MCF 10A (cell line): ENCODE measurements at regions of chr17 and their contacts with region 1.

Region 1: DNA sequence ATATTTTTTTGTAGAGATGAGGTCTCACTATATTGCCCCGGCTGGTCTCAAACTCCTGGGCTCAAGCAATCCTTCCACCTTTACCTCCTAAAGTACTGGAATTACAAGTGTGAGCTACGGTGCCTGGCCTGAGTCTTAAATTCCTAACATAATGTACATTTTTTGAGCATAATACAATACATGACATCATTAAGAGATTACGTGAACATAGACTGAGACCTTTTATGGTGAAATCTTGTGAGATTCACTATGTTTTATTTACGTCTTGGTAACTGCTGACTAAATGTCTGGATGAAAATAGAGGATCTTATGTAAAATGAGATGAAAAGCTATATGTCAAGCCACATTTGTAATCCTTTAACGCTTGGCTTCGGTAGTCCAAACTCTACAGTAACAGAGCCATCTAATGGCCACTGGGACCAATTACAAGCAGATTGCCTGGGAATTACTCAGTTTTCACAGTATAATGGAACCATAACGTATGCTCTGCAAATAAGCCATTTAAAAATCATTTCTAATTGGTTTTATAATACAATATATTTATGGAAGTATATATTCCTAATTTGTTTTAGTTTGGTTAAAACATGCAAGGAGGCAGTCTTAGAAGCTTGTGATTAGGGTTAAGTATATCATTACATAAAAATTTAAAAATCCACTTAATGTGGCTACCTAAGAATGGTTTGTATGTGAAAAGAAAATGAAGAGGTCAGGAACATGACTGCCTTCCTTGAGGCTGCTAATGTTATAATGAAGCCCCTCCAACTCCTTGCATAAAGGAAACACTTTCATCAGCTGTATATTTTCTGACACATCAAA is 8.1 kb upstream of the EFCAB13 start:
- DNase-seq: peak; percentile 83
- H3K4me3 Mint-ChIP-seq: no peak overlapping the region
- H3K27ac Mint-ChIP-seq: peak overlapping the region; percentile 23
- H3K4me1 Mint-ChIP-seq: peaks cover 4% of the 10 kb centered on the region
- H3K27me3 Mint-ChIP-seq: no peaks in the 10 kb centered on the region
- CTCF ChIP-seq: peak; percentile 89

Region 2: GRCh38 chr17:46940621-46941404 is 374.8 kb before region 1 on chr17:
- CTCF ChIA-PET with region 1: interaction called, 3 read pairs
- POLR2A ChIA-PET with region 1: no interaction called
- intact Hi-C with region 1: loop called (anchors 10 kb)
- DNase-seq: peak; percentile 72
- H3K4me3 Mint-ChIP-seq: no peak overlapping the region
- H3K27ac Mint-ChIP-seq: no peak overlapping the region
- H3K4me1 Mint-ChIP-seq: no peaks in the 10 kb centered on the region
- H3K27me3 Mint-ChIP-seq: no peaks in the 10 kb centered on the region
- CTCF ChIP-seq: peak; percentile 80

Region 3: DNA sequence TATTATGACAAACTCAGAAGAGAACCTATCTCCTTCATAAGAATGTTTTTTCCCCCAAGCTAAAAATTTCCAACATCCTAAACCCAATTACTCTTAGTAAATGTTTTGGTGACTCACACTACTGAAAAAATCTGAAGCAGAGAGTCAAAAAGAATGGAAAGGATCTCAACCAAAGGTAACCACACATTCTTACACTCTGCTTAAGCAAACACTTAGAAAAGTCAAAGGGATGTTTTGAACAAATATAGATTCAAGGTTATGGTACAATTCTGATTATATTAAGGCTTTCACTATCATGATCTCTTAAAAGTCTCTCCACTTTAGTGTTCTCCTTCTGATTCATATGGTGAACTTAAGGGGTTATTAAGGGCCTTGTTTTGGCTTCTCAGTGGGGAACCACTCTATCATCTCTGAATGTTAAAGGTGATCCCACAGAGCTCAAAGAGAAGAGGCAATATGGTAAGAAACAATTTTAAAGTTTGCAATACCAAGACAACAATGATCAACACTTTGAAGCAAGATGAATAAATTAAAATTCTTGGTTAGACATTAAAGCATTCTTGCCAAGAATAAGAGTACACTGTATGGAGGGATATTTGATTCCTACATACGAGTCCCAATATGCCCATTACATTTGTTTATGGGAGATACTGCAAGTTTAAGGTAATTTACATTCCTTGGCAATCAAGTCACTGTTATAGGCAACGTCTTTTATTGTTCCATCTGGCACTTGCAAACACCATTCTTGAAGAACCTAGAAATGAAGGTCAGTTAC is 195.7 kb before region 1 on chr17:
- CTCF ChIA-PET with region 1: no interaction called
- POLR2A ChIA-PET with region 1: no interaction called
- intact Hi-C with region 1: no loop called
- DNase-seq: peak; percentile 13
- H3K4me3 Mint-ChIP-seq: no peak overlapping the region
- H3K27ac Mint-ChIP-seq: peak overlapping the region; percentile 42
- H3K4me1 Mint-ChIP-seq: peaks cover 7% of the 10 kb centered on the region
- H3K27me3 Mint-ChIP-seq: no peaks in the 10 kb centered on the region
- CTCF ChIP-seq: no peak

Region 4: GRCh38 chr17:47229535-47230443 is 85.9 kb before region 1 on chr17:
- CTCF ChIA-PET with region 1: interaction called, 90 read pairs
- POLR2A ChIA-PET with region 1: interaction called, 7 read pairs
- intact Hi-C with region 1: loop called (anchors 1 kb)
- DNase-seq: peak; percentile 95
- H3K4me3 Mint-ChIP-seq: peak overlapping the region; percentile 19
- H3K27ac Mint-ChIP-seq: no peak overlapping the region
- H3K4me1 Mint-ChIP-seq: peaks cover 30% of the 10 kb centered on the region
- H3K27me3 Mint-ChIP-seq: no peaks in the 10 kb centered on the region
- CTCF ChIP-seq: peak; percentile 98

Region 5: GRCh38 chr17:47279062-47279736 is 36.5 kb before region 1 on chr17:
- CTCF ChIA-PET with region 1: no interaction called
- POLR2A ChIA-PET with region 1: no interaction called
- intact Hi-C with region 1: loop called (anchors 5 kb)
- DNase-seq: peak; percentile 98
- H3K4me3 Mint-ChIP-seq: peak overlapping the region; percentile 38
- H3K27ac Mint-ChIP-seq: peak overlapping the region; percentile 94
- H3K4me1 Mint-ChIP-seq: peaks cover 45% of the 10 kb centered on the region
- H3K27me3 Mint-ChIP-seq: no peaks in the 10 kb centered on the region
- CTCF ChIP-seq: no peak

Region 6: DNA sequence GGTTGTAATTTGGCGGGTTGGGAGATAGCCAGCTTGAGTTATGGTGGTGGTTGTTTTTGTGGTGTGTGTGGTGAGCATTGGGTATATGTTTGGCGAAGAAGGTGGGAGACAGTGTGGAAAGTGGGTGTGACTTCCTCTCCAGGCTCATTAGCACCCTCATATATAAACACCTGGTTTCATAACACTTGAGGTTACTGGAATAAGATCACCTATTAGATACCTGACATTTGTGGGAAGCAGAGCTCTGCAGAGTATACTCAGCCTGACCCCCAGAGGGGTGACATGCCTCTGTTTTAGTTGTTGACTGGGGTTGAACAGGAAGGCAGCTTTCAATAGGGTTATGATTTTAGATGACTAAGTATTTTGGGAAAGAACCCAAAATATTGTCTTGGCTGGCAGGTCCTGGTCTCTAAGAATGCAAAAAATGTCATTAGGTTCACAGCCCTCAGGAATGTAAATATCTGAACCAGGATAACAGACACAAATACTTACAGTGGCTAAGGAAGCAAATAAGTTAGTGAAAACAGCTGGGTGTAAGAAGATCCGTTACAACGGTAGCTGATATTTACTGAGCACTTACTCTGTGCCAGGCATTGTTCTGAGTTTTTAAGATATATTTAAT is 10.2 kb before region 1 on chr17:
- CTCF ChIA-PET with region 1: interaction called, 12 read pairs
- POLR2A ChIA-PET with region 1: interaction called, 7 read pairs
- intact Hi-C with region 1: no loop called
- DNase-seq: peak; percentile 89
- H3K4me3 Mint-ChIP-seq: no peak overlapping the region
- H3K27ac Mint-ChIP-seq: peak overlapping the region; percentile 29
- H3K4me1 Mint-ChIP-seq: peaks cover 21% of the 10 kb centered on the region
- H3K27me3 Mint-ChIP-seq: no peaks in the 10 kb centered on the region
- CTCF ChIP-seq: no peak

Region 7: DNA sequence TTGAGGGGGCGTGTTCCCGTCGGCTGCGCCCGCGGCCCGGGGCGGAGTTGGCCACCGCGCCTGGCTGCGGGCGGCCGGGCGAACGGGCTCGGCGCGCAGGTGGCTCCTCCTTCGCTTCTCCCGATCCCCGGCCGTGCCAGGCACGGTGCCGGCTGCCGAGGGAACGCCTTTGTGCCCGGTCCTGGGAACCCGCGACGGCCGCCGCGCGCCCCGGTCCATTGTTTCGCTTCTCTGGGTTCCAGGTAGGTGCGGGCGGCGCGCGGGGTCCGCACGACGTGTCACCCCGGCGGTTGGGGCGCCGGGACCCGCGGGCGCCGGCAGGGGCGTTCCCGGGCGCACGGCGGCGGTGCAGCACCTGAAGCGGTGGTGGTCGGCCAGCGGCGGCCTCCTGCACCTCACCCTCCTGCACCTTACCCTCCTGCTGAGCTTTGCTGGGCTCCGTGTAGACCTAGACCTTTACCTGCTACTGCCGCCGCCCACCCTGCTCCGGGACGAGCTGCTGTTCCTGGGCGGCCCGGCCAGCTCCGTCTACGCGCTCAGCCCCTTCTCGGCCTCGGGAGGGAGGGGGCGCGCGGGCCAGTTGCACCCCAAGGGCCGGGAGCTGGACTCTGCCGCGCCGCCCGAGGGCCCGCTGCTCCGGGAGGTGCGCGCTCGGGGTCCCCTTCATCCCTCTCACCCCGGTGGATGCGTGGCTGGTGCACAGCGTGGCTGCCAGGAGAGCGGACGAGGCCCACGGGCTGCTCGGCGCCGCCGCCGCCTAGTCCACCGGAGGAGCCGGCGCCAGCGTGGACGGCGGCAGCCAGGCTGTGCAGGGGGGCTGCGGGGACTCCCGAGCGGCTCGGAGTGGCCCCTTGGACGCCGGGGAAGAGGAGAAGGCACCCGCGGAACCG is 108.0 kb after region 1 on chr17:
- CTCF ChIA-PET with region 1: no interaction called
- POLR2A ChIA-PET with region 1: no interaction called
- intact Hi-C with region 1: no loop called
- DNase-seq: no peak
- H3K4me3 Mint-ChIP-seq: no peak overlapping the region
- H3K27ac Mint-ChIP-seq: no peak overlapping the region
- H3K4me1 Mint-ChIP-seq: no peaks in the 10 kb centered on the region
- H3K27me3 Mint-ChIP-seq: no peaks in the 10 kb centered on the region
- CTCF ChIP-seq: no peak